ENCODE measurements at regions of chr18 and their contacts with region 1.

Region 1: DNA sequence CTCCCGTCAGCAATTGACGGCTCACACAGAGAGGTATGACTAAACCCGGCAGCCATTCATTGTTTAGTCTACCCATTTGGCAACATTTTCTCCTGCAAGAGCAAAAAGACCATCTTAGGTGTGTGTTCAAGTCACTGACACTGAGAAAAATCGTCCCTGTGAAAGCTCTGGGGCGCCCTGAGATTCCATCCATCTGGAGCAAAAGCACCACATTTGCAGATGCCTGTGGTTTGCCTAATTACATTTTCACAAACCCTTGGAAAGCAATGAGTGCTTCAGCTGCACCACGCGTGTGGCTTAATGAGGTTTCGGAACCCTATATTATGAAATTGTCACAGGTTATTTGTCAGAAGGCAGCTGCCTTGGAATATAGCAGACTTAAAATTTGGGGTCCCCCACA is 110.7 kb upstream of the PTPRM start:
- DNase-seq: no peak
- H3K4me3 ChIP-seq: no peak overlapping the region
- CTCF ChIP-seq: no peak
- POLR2A ChIP-seq: no peak

Region 2: GRCh38 chr18:7358989-7359726 is 97.2 kb before region 1 on chr18:
- intact Hi-C with region 1: no loop called
- DNase-seq: no peak
- H3K4me3 ChIP-seq: no peak overlapping the region
- CTCF ChIP-seq: no peak
- POLR2A ChIP-seq: no peak

Region 3: DNA sequence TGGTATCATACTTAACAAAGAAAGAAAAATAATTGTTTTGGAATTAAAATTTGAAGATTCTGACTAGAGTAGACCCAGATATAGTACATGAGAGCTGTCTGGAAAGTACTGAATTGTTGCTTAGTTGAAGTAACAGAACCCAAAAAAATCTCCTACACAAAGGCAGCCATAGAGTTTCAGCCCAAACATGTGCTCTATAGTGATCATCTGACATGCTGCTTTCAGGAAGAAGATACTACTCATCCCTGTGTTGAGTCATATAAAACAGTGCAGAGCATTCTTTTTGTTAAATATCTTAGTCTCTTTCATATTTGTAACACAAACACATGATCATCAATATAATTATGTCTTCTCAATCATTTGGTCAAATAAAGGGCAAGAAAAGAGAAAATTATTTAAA is 26.0 kb after region 1 on chr18:
- intact Hi-C with region 1: loop called (anchors 1 kb)
- DNase-seq: no peak
- H3K4me3 ChIP-seq: no peak overlapping the region
- CTCF ChIP-seq: no peak
- POLR2A ChIP-seq: no peak

Measured in lower leg skin (tissue), 4 donors.